HEK293 (cell line): ENCODE measurements at regions of chr7 and their contacts with region 1.

Region 1: DNA sequence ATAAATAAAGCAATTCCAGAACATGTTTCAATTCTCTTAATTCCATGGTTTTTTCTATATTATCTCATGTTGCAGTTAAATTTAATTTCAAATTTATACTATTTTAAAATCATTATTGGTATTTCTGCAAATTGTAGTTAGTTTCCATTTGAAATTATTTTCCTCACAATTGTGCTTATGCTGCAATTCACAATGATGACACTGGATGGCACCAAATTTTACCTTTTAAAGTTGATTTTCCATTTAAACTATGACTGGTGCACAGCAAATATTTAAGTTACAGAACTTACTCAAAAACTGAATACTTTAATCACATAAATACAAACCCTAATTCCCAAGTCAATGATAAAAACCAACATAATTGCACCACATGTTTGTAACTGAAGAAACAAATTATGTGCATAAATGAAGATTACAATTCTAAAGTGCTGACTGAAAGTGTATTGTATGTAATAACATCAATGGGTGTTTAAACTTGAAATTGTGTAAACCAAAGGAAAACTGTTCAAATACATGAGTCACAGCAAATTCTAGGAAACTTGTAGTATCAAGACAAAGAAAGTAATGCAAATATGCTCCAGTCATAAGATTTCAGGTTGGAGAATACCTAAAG is 75.3 kb upstream of the AASS start:
- H3K4me3 ChIP-seq: no peak overlapping the region
- H3K27ac ChIP-seq: no peak overlapping the region
- H3K4me1 ChIP-seq: no peaks in the 10 kb centered on the region
- CTCF ChIP-seq: peak; percentile 24; the same call in 1 of the 2 replicates

Region 2: DNA sequence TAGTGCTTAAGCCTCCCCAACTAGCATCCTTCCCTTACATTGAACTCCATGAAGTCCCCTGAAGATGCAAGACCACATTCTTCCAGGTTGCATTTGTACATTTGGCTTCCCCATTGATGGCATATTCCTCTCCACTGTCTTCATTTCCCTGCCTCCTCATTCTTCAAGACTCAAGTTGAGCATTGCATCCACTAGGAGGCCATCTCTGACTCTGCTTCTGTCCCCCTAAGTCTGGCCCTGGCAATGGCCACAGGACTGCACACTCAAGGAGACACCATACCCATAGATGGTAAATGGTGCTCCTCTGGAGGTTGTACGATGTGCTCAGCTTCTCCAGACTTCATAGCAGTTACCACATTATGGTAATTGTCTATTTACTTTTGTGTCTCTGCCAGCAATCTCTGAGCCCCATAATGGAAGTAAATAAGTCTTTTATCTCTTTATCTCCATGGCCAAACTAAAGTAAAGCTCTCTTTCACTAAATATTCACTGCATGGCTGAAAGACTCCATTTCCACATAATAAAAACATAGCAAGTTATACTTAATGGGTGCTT is 233.8 kb before region 1 on chr7:
- CTCF ChIA-PET with region 1: no interaction called
- POLR2A ChIA-PET with region 1: no interaction called
- H3K4me3 ChIP-seq: no peak overlapping the region
- H3K27ac ChIP-seq: no peak overlapping the region
- H3K4me1 ChIP-seq: no peaks in the 10 kb centered on the region; the same call in 1 of the 2 replicates
- CTCF ChIP-seq: no peak

Region 3: DNA sequence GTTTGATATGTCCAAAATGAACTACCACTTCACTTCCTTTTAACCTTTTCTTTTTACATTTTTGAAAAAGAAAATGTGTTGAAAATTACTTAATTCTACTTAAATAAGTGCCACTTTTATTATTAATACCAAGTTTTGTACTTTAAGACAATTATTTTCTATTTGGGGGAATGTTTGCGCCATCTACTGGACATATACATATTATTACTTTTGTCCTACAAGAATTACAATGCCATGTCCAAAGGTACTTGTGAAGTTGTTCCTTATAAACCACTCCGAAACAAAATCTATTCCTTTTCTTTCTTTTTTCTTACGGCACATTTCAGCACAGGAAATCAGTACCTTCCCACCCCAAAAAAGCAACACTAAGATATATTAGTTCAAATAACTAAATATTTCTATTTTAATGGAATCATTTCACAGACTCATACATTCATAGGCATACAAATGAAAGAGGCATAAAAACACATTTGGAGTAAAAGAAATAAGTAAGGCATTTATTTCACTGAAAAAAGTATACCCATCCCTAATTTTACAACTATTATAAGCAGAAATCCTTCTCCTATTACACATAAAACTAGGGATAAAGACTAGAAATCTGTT is 309.6 kb after region 1 on chr7:
- CTCF ChIA-PET with region 1: interaction called, 50 read pairs
- POLR2A ChIA-PET with region 1: no interaction called
- H3K4me3 ChIP-seq: no peak overlapping the region
- H3K27ac ChIP-seq: no peak overlapping the region
- H3K4me1 ChIP-seq: no peaks in the 10 kb centered on the region
- CTCF ChIP-seq: no peak